H1 (cell line): ENCODE measurements at regions of chr3 and their contacts with region 1.

Region 1: GRCh38 chr3:156151824-156152428 is 31.5 kb downstream of the KCNAB1 start:
- DNase-seq: peak; percentile 63 to 83
- H3K4me3 ChIP-seq: no peak overlapping the region
- H3K27ac ChIP-seq: no peak overlapping the region
- H3K4me1 ChIP-seq: no peaks in the 10 kb centered on the region
- H3K27me3 ChIP-seq: no peaks in the 10 kb centered on the region
- CTCF ChIP-seq: peak; percentile 90 to 93 (median 91)
- EP300 ChIP-seq: no peak
- POLR2A ChIP-seq: no peak
- RAD21 ChIP-seq: peak; percentile 95 to 97

Region 2: DNA sequence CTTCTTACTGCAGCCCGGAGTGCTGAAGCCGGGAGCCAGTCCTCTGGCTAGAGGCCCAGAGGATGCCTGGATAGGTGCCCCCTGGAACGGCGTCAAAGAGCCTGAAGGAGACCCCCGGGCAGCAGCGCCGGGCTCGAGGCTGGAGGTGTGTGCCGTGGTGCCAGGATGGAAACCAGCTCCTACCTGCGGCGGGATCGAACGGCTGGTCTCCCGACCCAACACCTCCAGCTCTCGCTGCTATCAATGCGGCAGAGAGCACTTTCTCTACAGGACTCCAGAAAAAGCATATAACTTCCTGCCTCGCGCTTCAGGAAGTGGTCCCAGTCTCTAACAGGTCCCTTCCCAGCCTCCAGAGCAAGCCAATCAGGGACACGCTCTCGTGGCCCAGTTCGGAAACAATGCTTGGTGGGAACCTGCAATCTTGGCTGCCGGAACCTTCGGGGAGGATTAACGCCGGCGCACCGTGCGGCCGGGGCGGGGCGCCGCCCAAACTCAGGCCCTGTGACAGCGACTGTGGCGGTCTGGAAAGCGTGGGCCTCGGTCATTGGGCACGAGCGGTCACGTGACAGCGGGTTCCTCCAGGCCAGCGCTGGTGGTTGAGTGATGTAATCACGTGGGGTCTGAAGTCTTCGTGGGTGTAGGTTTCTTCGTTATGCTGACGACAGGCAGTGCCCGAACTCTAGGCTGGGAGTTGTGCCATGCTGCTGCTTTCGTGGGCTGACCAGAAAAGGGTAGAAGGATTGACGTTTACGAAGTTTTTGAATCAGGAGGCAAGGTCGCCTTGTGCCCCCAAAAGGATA is 297.6 kb before region 1 on chr3 and contains the start of gene SLC33A1:
- CTCF ChIA-PET with region 1: no interaction called
- POLR2A ChIA-PET with region 1: no interaction called
- DNase-seq: peak; percentile 97 to 98
- H3K4me3 ChIP-seq: peak within 1 kb of the TSS; percentile 85 to 96 (median 88)
- H3K27ac ChIP-seq: peak within 1 kb of the TSS; percentile 66
- H3K4me1 ChIP-seq: peaks cover 0 to 9% (median 3%) of the 10 kb centered on the region in 4 experiments; a peak in 4 of 7 replicates
- H3K27me3 ChIP-seq: no peaks in the 10 kb centered on the region
- CTCF ChIP-seq: no peak
- EP300 ChIP-seq: peak in 1 of 2 experiments; percentile 55; a peak in 1 of 3 replicates
- POLR2A ChIP-seq: peak; percentile 72 to 78
- RAD21 ChIP-seq: peak in 1 of 2 experiments; percentile 0; a peak in 1 of 4 replicates
- total RNA-seq, gene SLC33A1: 21.4 and 24.2 TPM in 2 replicates

Region 3: DNA sequence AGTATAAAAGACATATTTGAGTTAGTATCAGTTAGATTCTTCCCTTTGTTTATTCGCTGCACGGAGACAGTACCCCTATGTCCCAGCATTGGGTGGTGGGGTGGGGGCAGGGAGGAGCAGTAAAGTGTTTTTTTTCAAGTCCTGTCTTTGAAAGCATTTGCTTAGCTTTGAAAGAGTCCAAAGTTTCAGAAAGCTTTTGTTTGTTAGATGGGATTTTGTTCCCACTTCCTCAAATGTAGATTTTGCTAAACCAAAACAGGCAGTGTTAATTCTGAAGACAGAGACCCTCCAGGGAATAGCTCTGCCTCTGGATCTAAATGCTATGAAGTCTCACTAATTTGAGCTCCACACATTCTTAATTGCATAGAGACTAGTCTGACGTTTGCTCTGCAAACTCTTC is 146.2 kb before region 1 on chr3:
- CTCF ChIA-PET with region 1: interaction called, 22 read pairs
- POLR2A ChIA-PET with region 1: no interaction called
- DNase-seq: no peak
- H3K4me3 ChIP-seq: no peak overlapping the region
- H3K27ac ChIP-seq: no peak overlapping the region
- H3K4me1 ChIP-seq: no peaks in the 10 kb centered on the region; a peak in 1 of 7 replicates
- H3K27me3 ChIP-seq: no peaks in the 10 kb centered on the region
- CTCF ChIP-seq: no peak
- EP300 ChIP-seq: no peak
- POLR2A ChIP-seq: no peak
- RAD21 ChIP-seq: no peak

Region 4: GRCh38 chr3:156166808-156167207 is 14.9 kb after region 1 on chr3:
- CTCF ChIA-PET with region 1: interaction called, 38 read pairs
- POLR2A ChIA-PET with region 1: no interaction called
- DNase-seq: no peak
- H3K4me3 ChIP-seq: no peak overlapping the region
- H3K27ac ChIP-seq: no peak overlapping the region
- H3K4me1 ChIP-seq: no peaks in the 10 kb centered on the region
- H3K27me3 ChIP-seq: no peaks in the 10 kb centered on the region
- CTCF ChIP-seq: no peak
- EP300 ChIP-seq: no peak
- POLR2A ChIP-seq: no peak
- RAD21 ChIP-seq: no peak

Region 5: DNA sequence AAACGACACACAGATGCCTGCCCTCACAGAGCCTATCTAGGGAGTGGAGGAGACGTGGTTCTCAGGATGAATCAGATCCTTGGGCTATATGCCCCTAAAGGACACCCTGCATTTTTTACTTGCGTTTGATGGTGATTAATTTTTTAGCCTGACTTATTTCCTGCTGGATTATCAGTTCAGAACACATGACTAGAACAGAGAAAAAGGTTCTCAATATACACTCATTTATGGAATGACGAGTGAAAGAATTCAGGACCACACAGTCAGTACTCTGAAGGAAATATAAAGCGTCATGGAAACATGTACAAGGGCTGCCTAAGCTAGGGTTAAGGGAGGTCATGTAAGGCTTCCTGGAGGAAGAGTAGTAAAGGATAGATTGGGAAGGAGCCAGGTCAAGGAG is 281.2 kb after region 1 on chr3:
- CTCF ChIA-PET with region 1: interaction called, 10 read pairs
- POLR2A ChIA-PET with region 1: no interaction called
- DNase-seq: no peak
- H3K4me3 ChIP-seq: no peak overlapping the region
- H3K27ac ChIP-seq: no peak overlapping the region
- H3K4me1 ChIP-seq: no peaks in the 10 kb centered on the region
- H3K27me3 ChIP-seq: no peaks in the 10 kb centered on the region
- CTCF ChIP-seq: no peak
- EP300 ChIP-seq: no peak
- POLR2A ChIP-seq: no peak
- RAD21 ChIP-seq: no peak

Region 6: GRCh38 chr3:156474560-156475389 is 322.8 kb after region 1 on chr3:
- CTCF ChIA-PET with region 1: interaction called, 40 read pairs
- POLR2A ChIA-PET with region 1: no interaction called
- DNase-seq: no peak
- H3K4me3 ChIP-seq: peak overlapping the region in 2 of 4 experiments; percentile 10 to 38; a peak in 2 of 8 replicates
- H3K27ac ChIP-seq: no peak overlapping the region
- H3K4me1 ChIP-seq: no peaks in the 10 kb centered on the region
- H3K27me3 ChIP-seq: no peaks in the 10 kb centered on the region
- CTCF ChIP-seq: peak; percentile 46 to 66 (median 66)
- EP300 ChIP-seq: no peak
- POLR2A ChIP-seq: no peak
- RAD21 ChIP-seq: peak; percentile 54 to 66

Region 7: GRCh38 chr3:156542715-156543555 is 391.0 kb after region 1 on chr3:
- CTCF ChIA-PET with region 1: interaction called, 12 read pairs
- POLR2A ChIA-PET with region 1: no interaction called
- DNase-seq: no peak
- H3K4me3 ChIP-seq: no peak overlapping the region
- H3K27ac ChIP-seq: no peak overlapping the region
- H3K4me1 ChIP-seq: no peaks in the 10 kb centered on the region
- H3K27me3 ChIP-seq: no peaks in the 10 kb centered on the region
- CTCF ChIP-seq: no peak
- EP300 ChIP-seq: no peak
- POLR2A ChIP-seq: no peak
- RAD21 ChIP-seq: no peak